ENCODE measurements at regions of chr20 and their contacts with region 1.

Region 1: GRCh38 chr20:48921151-48921898 is at the start of gene ARFGEF2:
- DNase-seq: peak; percentile 79 to 96 (median 89)
- ATAC-seq: peak; percentile 92
- H3K4me3 ChIP-seq: peak within 1 kb of the TSS; percentile 77 to 99
- H3K4me3 Mint-ChIP-seq: peak within 1 kb of the TSS; percentile 93
- H3K27ac ChIP-seq: peak within 1 kb of the TSS; percentile 93 to 94
- H3K27ac Mint-ChIP-seq: peak within 1 kb of the TSS; percentile 95
- H3K4me1 ChIP-seq: peaks cover 28% of the 10 kb centered on the region
- H3K4me1 Mint-ChIP-seq: peaks cover 49% of the 10 kb centered on the region
- H3K27me3 ChIP-seq: no peaks in the 10 kb centered on the region
- H3K27me3 Mint-ChIP-seq: no peaks in the 10 kb centered on the region
- CTCF ChIP-seq: no peak
- total RNA-seq, gene ARFGEF2: 25.7 to 26.7 TPM

Region 2: DNA sequence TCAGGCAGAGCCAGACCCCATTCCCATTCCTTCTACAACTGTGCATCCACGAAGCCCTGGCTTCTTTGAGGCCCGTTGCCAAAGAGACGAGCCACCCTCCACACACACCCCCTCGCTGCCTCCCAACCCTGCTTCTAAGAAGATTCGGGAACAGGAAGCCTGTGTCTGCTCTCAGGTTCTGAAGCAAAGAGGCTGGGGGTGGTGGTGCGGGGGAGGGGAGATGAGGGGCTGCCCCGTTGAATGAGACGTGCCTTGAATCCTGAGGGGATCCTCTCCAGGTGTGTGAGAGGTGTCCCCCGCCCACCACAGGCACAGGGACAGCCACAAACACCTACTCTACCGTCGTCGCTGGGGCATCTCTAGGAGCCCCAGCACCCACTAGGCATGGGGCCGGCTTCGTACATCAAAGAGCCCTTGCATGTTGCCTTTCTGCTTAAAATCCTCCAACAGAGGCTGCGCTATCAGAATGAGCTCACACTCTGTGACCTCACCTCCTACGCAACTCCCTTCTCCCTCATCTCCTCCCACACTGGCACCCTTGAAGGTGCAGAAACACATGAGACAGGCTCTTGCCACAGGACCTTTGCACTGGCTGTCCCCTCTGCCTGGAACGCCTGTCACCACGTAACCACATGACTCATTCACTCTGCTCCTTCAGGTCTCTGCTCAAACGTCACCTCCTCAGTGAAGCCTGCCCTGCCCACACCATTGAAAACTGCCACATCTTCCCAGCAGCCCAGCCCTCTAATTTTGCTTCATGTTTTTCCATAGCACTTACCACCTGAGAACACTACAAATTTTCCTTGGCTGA is 152.1 kb before region 1 on chr20:
- CTCF ChIA-PET with region 1: no interaction called
- POLR2A ChIA-PET with region 1: no interaction called
- intact Hi-C with region 1: loop called (anchors 1 to 5 kb)
- DNase-seq: peak; percentile 55 to 98 (median 85)
- ATAC-seq: peak; percentile 85
- H3K4me3 ChIP-seq: no peak overlapping the region
- H3K4me3 Mint-ChIP-seq: peak overlapping the region; percentile 71
- H3K27ac ChIP-seq: peak overlapping the region; percentile 62 to 89
- H3K27ac Mint-ChIP-seq: peak overlapping the region; percentile 92
- H3K4me1 ChIP-seq: peaks cover 80% of the 10 kb centered on the region
- H3K4me1 Mint-ChIP-seq: peaks cover 91% of the 10 kb centered on the region
- H3K27me3 ChIP-seq: no peaks in the 10 kb centered on the region
- H3K27me3 Mint-ChIP-seq: no peaks in the 10 kb centered on the region
- CTCF ChIP-seq: no peak

Region 3: DNA sequence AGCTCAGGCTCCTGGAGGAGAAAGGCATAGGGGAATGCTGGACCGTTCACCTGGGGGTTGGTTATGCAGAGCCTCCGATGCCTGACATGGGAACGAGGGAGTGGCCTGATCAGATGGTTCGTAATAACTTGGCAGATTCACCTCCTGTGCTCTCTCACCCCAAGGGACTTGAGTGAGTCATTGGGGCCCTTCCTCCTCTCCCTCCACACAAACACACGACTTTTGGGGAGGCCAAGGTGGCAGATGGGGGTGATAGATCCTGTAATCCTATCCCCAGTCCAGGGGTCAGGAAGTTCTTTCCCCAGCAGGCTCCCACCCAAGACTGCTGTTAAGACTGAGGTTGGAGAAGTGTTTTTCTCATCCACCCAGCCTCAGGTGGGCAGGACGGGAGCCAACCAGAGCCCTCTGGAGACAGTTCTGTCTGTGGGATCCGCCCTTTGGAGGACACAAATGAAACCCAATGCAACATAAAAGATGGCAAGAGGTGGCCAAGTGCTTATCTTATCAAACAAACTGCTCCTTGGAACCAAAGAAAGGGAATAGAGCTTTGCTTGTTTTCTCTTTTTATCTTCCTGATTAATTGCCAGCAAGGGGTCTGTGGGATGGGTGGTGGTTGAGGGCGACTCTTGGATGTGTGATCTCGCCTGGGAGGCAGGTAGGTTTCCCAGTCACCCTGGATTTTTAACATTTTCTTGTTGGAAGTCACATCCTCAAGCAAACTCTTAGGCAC is 45.2 kb before region 1 on chr20:
- CTCF ChIA-PET with region 1: no interaction called
- POLR2A ChIA-PET with region 1: no interaction called
- intact Hi-C with region 1: no loop called
- DNase-seq: no peak
- ATAC-seq: no peak
- H3K4me3 ChIP-seq: no peak overlapping the region
- H3K4me3 Mint-ChIP-seq: no peak overlapping the region
- H3K27ac ChIP-seq: no peak overlapping the region
- H3K27ac Mint-ChIP-seq: no peak overlapping the region
- H3K4me1 ChIP-seq: peaks cover 6% of the 10 kb centered on the region
- H3K4me1 Mint-ChIP-seq: peaks cover 12% of the 10 kb centered on the region
- H3K27me3 ChIP-seq: no peaks in the 10 kb centered on the region
- H3K27me3 Mint-ChIP-seq: no peaks in the 10 kb centered on the region
- CTCF ChIP-seq: no peak

Region 4: DNA sequence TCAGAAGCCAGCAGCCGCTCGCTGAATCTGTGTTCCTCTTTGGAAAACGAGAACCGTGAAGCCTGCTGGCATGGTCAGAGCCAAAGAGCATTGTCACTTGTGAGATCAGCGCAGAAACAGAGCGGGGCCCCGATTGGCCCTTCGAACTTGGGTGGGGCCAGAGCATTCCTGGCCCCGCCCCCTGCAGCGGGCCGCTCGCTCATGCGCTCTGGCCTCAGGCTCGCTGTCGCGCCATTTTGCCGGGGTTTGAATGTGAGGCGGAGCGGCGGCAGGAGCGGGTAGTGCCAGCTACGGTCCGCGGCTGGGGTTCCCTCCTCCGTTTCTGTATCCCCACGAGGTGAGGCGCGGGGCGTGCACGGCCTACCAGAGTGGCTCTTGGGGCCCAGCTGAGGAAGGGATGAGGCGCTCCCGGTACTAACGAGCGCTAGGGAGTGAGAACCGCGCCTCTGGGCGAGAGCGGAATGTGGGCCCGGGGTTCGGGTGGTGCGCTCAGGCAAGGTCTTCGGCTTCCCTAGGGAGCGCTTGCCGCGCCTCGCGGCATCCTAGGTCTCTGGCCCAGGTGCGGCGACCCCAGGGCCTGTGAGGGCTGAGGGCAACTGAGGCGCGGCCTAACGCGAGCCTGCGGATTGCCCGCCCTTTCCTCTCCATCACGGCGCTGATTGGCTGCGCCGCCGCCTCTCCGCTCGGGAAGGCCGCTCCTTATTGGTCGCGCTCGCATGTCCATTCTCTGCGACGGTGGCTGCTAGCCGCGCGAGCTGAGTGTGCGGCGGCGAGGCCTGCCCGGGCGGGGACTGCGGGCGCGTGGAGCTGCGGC is 125.0 kb after region 1 on chr20 and contains the start of gene CSE1L:
- CTCF ChIA-PET with region 1: no interaction called
- POLR2A ChIA-PET with region 1: interaction called, 3 read pairs
- intact Hi-C with region 1: loop called (anchors 1 to 5 kb)
- DNase-seq: peak; percentile 86 to 98 (median 95)
- ATAC-seq: peak; percentile 89
- H3K4me3 ChIP-seq: peak within 1 kb of the TSS; percentile 81 to 96
- H3K4me3 Mint-ChIP-seq: peak within 1 kb of the TSS; percentile 98
- H3K27ac ChIP-seq: peak within 1 kb of the TSS; percentile 85 to 90
- H3K27ac Mint-ChIP-seq: peak within 1 kb of the TSS; percentile 97
- H3K4me1 ChIP-seq: peaks cover 27% of the 10 kb centered on the region
- H3K4me1 Mint-ChIP-seq: peaks cover 34% of the 10 kb centered on the region
- H3K27me3 ChIP-seq: no peaks in the 10 kb centered on the region
- H3K27me3 Mint-ChIP-seq: no peaks in the 10 kb centered on the region
- CTCF ChIP-seq: no peak
- total RNA-seq, gene CSE1L: 31.8 to 33.4 TPM

Measured in CD8-positive, alpha-beta T cell (primary cell).